Transverse colon (tissue), 4 donors: ENCODE measurements at regions of chr12 and their contacts with region 1.

Region 1: DNA sequence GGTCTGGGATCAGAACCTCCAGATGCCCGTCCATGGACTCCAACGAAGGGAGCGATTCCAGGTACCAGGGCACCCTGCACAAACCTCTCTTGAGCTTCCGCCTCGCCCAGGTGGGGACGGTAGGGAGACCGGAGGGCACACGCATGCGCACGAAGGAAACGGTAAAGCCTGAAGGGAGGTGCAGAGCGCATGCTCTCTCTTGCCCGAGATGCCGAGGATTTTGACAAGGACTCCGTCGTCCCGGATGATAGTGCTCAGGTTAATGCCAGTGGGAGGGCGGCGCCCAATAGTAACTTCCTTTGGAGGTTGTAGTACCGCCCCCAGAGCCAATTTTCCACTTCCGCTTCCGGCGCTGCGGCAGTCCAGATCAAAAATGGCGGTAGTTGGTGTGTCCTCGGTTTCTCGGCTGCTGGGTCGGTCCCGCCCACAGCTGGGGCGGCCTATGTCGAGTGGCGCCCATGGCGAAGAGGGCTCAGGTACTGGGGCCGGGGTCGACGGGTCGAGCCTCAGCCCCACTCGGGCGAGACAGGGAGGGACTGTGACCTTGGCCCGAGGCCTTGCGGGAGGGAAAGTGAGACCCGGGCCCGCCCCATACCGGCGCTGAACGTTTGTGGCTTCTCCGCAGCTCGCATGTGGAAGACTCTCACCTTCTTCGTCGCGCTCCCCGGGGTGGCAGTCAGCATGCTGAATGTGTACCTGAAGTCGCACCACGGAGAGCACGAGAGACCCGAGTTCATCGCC is at the start of gene COX6A1:
- DNase-seq: peak; percentile 98
- H3K4me3 ChIP-seq: peak within 1 kb of the TSS; percentile 69 to 94 (median 83)
- H3K27ac ChIP-seq: peak within 1 kb of the TSS; percentile 90 to 92 (median 92)
- H3K4me1 ChIP-seq: peaks cover 11 to 20% (median 13%) of the 10 kb centered on the region in 4 donors
- H3K27me3 ChIP-seq: no peaks in the 10 kb centered on the region
- CTCF ChIP-seq: peak in 1 of 5 experiments; percentile 12
- EP300 ChIP-seq: no peak
- POLR2A ChIP-seq: peak; percentile 89
- total RNA-seq, gene COX6A1: 469 to 1,865 (median 1,048) TPM

Region 2: DNA sequence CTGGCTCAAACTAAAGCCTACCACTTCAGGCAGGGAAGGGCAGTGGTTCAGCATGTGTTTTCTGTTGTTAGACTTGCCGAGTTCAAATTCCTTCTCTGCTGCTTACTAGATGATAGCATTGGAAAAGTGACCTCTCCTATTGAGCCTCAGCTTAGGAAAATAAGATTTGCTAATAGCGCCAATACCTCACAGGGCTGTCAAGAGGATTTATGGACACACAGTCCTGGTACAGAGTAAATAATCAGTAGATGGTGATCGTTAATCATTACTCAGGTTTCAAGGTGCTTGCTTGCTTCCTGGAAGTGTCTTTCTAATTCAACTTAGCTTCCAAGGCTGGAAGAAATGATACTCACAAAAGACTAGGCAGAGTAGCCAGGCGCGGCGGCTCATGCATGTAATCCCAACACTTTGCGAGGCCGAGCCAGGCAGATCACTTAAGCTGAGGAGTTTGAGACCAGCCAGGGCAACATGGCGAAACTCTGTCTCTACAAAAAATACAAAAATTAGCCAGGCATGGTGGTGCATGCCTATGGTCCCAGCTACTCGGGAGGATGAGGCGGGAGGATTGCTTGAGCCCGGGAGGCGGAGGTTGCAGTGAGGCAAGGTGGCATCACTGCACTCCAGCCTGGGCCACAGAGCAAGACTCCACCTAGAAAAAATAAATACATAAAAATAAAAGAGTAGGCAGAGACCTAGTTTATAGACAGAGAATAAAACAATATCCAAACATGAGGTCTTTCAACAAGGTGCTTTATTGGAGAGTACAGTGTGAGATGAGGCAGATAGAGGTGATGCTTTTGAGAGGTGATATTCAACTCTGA is 116.3 kb before region 1 on chr12:
- in situ Hi-C with region 1: loop called in 1 of 4 experiments (anchors 10 kb)
- intact Hi-C with region 1: no loop called
- DNase-seq: peak; percentile 23
- H3K4me3 ChIP-seq: no peak overlapping the region
- H3K27ac ChIP-seq: peak overlapping the region; percentile 45 to 78 (median 69)
- H3K4me1 ChIP-seq: peaks cover 0 to 26% (median 18%) of the 10 kb centered on the region in 4 donors
- H3K27me3 ChIP-seq: no peaks in the 10 kb centered on the region
- CTCF ChIP-seq: no peak
- EP300 ChIP-seq: no peak
- POLR2A ChIP-seq: no peak

Region 3: GRCh38 chr12:120356567-120357030 is 81.3 kb before region 1 on chr12:
- in situ Hi-C with region 1: loop called in 1 of 4 experiments (anchors 10 kb)
- intact Hi-C with region 1: no loop called
- DNase-seq: peak; percentile 81
- H3K4me3 ChIP-seq: no peak overlapping the region
- H3K27ac ChIP-seq: no peak overlapping the region
- H3K4me1 ChIP-seq: peaks cover 0 to 4% (median under 1%) of the 10 kb centered on the region in 4 donors
- H3K27me3 ChIP-seq: no peaks in the 10 kb centered on the region
- CTCF ChIP-seq: peak; percentile 84 to 93 (median 85)
- EP300 ChIP-seq: no peak
- POLR2A ChIP-seq: no peak

Region 4: GRCh38 chr12:120737557-120738251 is 299.8 kb after region 1 on chr12:
- in situ Hi-C with region 1: no loop called
- intact Hi-C with region 1: no loop called
- DNase-seq: no peak
- H3K4me3 ChIP-seq: no peak overlapping the region
- H3K27ac ChIP-seq: no peak overlapping the region
- H3K4me1 ChIP-seq: no peaks in the 10 kb centered on the region
- H3K27me3 ChIP-seq: no peaks in the 10 kb centered on the region
- CTCF ChIP-seq: no peak
- EP300 ChIP-seq: no peak
- POLR2A ChIP-seq: no peak